Astrocyte of the cerebellum (primary cell): ENCODE measurements at regions of chr17 and their contacts with region 1.

Region 1: GRCh38 chr17:21549107-21549687 is 143.1 kb upstream of the KCNJ18 start:
- DNase-seq: no peak
- H3K4me3 ChIP-seq: peak overlapping the region; percentile 4
- CTCF ChIP-seq: no peak

Region 2: GRCh38 chr17:21284319-21285163 is 264.7 kb before region 1 on chr17 and contains the start of gene MAP2K3:
- in situ Hi-C with region 1: loop called (anchors 25 kb)
- DNase-seq: peak; percentile 98
- H3K4me3 ChIP-seq: peak within 1 kb of the TSS; percentile 68
- CTCF ChIP-seq: no peak